ENCODE measurements at regions of chr6 and their contacts with region 1.

Region 1: GRCh38 chr6:150962436-150962835 is 96.9 kb downstream of the MTHFD1L start:
- DNase-seq: no peak
- H3K4me3 ChIP-seq: no peak overlapping the region
- H3K27ac ChIP-seq: no peak overlapping the region
- H3K4me1 ChIP-seq: no peaks in the 10 kb centered on the region
- H3K27me3 ChIP-seq: no peaks in the 10 kb centered on the region
- CTCF ChIP-seq: no peak

Region 2: GRCh38 chr6:150910556-150910955 is 51.9 kb before region 1 on chr6:
- CTCF ChIA-PET with region 1: no interaction called
- POLR2A ChIA-PET with region 1: interaction called, 16 read pairs
- intact Hi-C with region 1: no loop called
- DNase-seq: peak in 1 of 2 experiments; percentile 47
- H3K4me3 ChIP-seq: no peak overlapping the region
- H3K27ac ChIP-seq: no peak overlapping the region
- H3K4me1 ChIP-seq: no peaks in the 10 kb centered on the region
- H3K27me3 ChIP-seq: no peaks in the 10 kb centered on the region
- CTCF ChIP-seq: no peak

Region 3: GRCh38 chr6:151592449-151593159 is 630.2 kb after region 1 on chr6:
- CTCF ChIA-PET with region 1: no interaction called
- POLR2A ChIA-PET with region 1: no interaction called
- intact Hi-C with region 1: no loop called
- DNase-seq: no peak
- H3K4me3 ChIP-seq: no peak overlapping the region
- H3K27ac ChIP-seq: no peak overlapping the region
- H3K4me1 ChIP-seq: no peaks in the 10 kb centered on the region
- H3K27me3 ChIP-seq: no peaks in the 10 kb centered on the region
- CTCF ChIP-seq: no peak

Measured in PC-9 (cell line).